ENCODE measurements at regions of chr5 and their contacts with region 1.

Region 1: GRCh38 chr5:58460732-58461286 is 923 bp upstream of the PLK2 start:
- DNase-seq: peak; percentile 97
- H3K4me3 ChIP-seq: peak overlapping the region; percentile 78
- H3K27ac ChIP-seq: peak overlapping the region; percentile 86
- H3K4me1 ChIP-seq: no peaks in the 10 kb centered on the region
- H3K27me3 ChIP-seq: no peaks in the 10 kb centered on the region
- CTCF ChIP-seq: peak; percentile 73

Region 2: GRCh38 chr5:57298295-57298984 is 1162.4 kb before region 1 on chr5:
- intact Hi-C with region 1: loop called (anchors 5 kb)
- DNase-seq: peak; percentile 98
- H3K4me3 ChIP-seq: no peak overlapping the region
- H3K27ac ChIP-seq: peak overlapping the region; percentile 6
- H3K4me1 ChIP-seq: no peaks in the 10 kb centered on the region
- H3K27me3 ChIP-seq: no peaks in the 10 kb centered on the region
- CTCF ChIP-seq: peak; percentile 69

Region 3: GRCh38 chr5:57499262-57500050 is 961.4 kb before region 1 on chr5:
- intact Hi-C with region 1: loop called (anchors 10 kb)
- DNase-seq: no peak
- H3K4me3 ChIP-seq: no peak overlapping the region
- H3K27ac ChIP-seq: no peak overlapping the region
- H3K4me1 ChIP-seq: no peaks in the 10 kb centered on the region
- H3K27me3 ChIP-seq: no peaks in the 10 kb centered on the region
- CTCF ChIP-seq: peak; percentile 58

Region 4: DNA sequence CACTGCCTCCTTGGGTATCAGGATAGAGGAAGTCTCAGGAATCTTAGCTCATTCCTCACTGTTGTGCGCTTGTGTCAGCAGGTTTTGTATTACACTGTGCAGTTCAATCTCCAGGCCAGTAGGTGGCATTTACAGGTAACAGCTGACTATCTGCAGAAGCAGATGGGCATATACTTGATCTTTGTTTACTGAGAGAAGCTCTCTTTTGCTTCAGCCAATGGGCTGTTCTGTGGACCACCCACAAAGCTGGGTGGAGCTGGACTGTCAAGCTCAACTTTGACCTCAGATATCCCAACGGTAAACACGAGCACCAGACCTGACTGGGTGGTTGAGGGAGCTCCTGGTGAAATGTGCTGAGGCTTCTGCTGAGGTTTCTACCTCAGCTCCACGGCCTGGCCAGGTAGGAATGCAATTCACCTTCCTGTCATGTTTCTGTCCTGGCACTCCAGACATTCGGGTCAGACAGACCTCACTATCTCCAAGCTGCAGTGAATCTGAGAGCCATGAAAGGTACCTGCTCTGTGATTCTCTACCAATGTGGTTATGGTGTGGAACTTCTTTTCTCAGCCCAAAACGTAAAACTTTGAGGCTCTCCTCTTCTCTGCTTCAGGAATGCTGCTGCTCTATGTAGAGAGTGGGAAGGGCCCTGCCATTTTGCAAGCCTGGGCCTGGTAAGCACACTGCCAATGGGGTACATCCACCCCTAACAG is 810.3 kb before region 1 on chr5:
- intact Hi-C with region 1: loop called (anchors 5 kb)
- DNase-seq: peak; percentile 32
- H3K4me3 ChIP-seq: no peak overlapping the region
- H3K27ac ChIP-seq: no peak overlapping the region
- H3K4me1 ChIP-seq: no peaks in the 10 kb centered on the region
- H3K27me3 ChIP-seq: no peaks in the 10 kb centered on the region
- CTCF ChIP-seq: peak; percentile 57

Region 5: DNA sequence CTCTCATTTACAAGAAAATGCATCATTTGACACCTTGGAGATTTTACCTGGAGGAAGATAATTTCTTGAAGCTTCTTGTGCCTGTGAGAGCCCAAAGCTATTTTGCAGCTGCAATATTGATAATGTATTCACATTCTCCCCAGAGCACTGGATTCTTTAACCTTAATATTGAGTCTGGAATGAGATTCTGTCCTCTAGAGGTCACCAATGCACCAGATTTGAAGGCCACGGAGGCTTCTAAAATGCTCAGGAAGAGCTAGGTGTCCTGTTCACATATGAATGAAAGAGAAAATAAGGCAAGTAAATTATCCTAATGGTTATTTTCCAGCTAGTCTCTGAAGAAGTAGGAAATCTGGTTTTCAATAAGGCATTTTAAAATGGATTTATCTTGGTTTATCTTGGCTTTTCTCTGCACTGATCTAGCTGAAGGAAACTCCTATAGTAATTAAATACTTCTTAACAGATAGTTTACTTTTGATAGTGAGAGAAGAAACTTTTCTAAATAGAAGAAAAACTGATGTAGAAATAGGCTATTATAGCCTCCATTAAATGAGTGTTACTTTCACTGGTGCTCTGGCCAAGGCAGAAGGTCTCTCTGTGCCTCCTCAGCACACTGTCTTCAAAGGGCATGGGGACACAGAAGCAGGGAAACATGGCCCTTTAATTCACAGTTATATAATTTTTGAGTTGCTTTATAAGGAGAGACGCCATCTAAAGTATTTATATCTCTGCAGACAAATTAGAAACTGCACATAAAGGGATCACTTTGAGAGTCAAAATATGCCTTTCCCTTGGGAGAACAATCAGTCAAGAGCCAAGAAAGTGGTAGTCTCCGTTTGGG is 681.2 kb before region 1 on chr5:
- intact Hi-C with region 1: loop called (anchors 2 kb)
- DNase-seq: peak; percentile 36
- H3K4me3 ChIP-seq: no peak overlapping the region
- H3K27ac ChIP-seq: no peak overlapping the region
- H3K4me1 ChIP-seq: no peaks in the 10 kb centered on the region
- H3K27me3 ChIP-seq: no peaks in the 10 kb centered on the region
- CTCF ChIP-seq: peak; percentile 62

Region 6: GRCh38 chr5:57887851-57888621 is 572.8 kb before region 1 on chr5:
- intact Hi-C with region 1: loop called (anchors 2 kb)
- DNase-seq: peak; percentile 45
- H3K4me3 ChIP-seq: no peak overlapping the region
- H3K27ac ChIP-seq: no peak overlapping the region
- H3K4me1 ChIP-seq: no peaks in the 10 kb centered on the region
- H3K27me3 ChIP-seq: no peaks in the 10 kb centered on the region
- CTCF ChIP-seq: peak; percentile 52

Region 7: DNA sequence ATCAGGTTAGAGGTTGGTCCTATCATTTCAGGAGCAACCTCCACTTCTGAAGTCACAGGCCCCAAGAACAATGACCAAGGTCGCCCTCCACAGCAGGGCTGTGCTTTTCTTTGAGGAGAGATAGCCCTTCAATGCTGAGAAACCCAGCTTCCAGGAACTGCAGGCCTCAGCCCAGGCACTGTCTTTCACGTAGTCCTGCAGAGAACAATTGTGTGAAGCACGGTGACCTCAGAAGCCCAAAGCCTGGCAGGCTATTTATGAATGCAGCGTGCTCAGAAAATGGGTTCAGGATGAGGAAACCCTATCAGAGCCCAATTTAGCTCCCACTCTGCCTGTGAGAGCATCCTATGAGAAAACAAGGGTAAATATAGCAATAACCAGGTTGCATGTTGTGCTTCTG is 389.2 kb before region 1 on chr5:
- intact Hi-C with region 1: loop called (anchors 10 kb)
- DNase-seq: no peak
- H3K4me3 ChIP-seq: no peak overlapping the region
- H3K27ac ChIP-seq: no peak overlapping the region
- H3K4me1 ChIP-seq: no peaks in the 10 kb centered on the region
- H3K27me3 ChIP-seq: no peaks in the 10 kb centered on the region
- CTCF ChIP-seq: no peak

Region 8: DNA sequence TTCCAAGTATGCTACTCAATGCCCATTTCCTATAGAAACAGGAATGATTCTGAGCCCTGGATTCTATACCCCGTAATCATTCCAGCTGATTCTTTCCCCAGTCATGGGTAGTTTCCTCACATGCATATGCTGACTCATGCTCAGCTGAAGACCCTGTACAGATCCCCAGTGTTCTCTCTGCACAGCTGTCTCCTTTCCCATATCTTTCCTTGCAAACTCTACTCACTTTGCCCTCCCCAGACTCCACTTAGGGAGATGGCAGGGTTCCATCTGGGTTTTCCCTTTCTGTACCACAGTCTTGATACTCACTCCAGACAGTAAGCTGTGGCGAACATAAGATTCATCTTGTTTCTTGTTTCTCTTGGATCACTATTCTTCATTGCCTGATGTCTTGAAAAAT is 479.6 kb after region 1 on chr5:
- intact Hi-C with region 1: no loop called
- DNase-seq: no peak
- H3K4me3 ChIP-seq: no peak overlapping the region
- H3K27ac ChIP-seq: no peak overlapping the region
- H3K4me1 ChIP-seq: no peaks in the 10 kb centered on the region
- H3K27me3 ChIP-seq: no peaks in the 10 kb centered on the region
- CTCF ChIP-seq: no peak

Measured in colonic mucosa (tissue), 4 donors.